GM13976 (cell line): ENCODE measurements at regions of chr4 and their contacts with region 1.

Region 1: DNA sequence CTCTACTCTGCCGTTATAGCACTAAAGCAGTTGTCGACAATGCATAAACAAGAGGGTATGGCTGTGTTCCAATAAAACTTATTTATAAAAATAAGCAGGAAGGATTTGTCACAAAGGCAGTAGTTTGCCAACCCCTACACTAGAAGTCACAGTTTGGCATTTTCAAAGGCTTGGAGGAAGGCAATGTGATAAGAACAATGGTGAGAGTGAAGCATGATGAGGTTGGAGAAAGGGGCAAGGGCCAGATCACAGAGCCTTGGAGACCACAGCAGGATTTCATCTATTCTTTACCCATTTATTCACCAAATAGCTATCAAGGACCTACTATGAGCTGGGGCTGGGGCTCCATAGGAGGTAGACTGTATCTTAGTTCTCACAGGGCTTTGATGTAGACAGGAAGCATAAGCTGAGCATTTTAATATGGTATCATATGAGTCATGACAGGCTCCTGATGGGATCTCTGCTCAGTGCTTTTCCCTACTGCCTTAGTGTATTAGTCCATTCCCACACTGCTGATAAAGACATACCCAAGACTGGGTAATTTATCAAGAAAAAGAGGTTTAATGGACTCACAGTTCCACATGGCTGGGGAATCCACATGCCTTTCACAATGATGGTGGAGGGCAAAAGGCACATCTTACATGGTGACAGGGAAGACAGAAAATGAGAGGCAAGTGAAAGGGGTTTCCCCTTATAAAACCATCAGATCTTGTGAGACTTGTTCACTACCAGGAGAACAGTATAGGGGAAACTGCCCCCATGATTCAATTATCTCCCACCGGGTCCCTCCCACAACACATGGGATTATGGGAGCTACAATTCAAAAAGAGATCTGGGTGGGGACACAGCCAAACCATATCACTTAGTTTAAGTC is 58.9 kb downstream of the PPM1K start:
- DNase-seq: no peak
- CTCF ChIP-seq: no peak

Region 2: GRCh38 chr4:88378691-88379559 is 153.5 kb after region 1 on chr4 and contains the start of gene HERC6:
- in situ Hi-C with region 1: loop called (anchors 10 kb)
- DNase-seq: peak; percentile 86
- CTCF ChIP-seq: peak; percentile 88

Region 3: DNA sequence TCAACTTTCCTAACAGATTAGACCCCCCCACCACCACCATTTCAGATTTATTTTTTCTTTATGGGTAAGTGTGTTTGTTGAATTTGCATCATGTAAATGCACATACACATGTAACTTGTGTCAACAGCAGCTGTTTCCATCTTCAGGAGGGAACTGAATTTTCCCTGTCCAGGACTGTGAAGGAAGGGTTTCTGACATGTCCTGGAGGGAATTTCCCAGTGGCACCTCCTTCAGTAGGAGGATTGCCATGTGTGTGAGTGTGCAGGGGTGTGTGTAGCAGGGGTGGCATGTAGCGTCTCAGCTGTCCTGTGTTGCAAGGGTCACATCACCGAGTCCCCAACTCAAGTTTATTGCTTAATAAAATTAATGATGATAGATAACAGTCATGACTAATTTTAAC is 172.9 kb after region 1 on chr4:
- in situ Hi-C with region 1: no loop called
- DNase-seq: no peak
- CTCF ChIP-seq: no peak

Region 4: GRCh38 chr4:88439161-88439760 is 213.8 kb after region 1 on chr4:
- in situ Hi-C with region 1: no loop called
- DNase-seq: no peak
- CTCF ChIP-seq: no peak

Region 5: GRCh38 chr4:88728146-88728545 is 502.7 kb after region 1 on chr4:
- in situ Hi-C with region 1: no loop called
- DNase-seq: no peak
- CTCF ChIP-seq: no peak